ENCODE measurements at regions of chr17 and their contacts with region 1.

Region 1: GRCh38 chr17:4877089-4877488 is 22.2 kb upstream of the C17orf107 start:
- H3K4me3 Mint-ChIP-seq: no peak overlapping the region
- H3K27ac Mint-ChIP-seq: peak overlapping the region; percentile 78
- H3K4me1 Mint-ChIP-seq: peaks cover 94% of the 10 kb centered on the region
- H3K27me3 Mint-ChIP-seq: no peaks in the 10 kb centered on the region

Region 2: DNA sequence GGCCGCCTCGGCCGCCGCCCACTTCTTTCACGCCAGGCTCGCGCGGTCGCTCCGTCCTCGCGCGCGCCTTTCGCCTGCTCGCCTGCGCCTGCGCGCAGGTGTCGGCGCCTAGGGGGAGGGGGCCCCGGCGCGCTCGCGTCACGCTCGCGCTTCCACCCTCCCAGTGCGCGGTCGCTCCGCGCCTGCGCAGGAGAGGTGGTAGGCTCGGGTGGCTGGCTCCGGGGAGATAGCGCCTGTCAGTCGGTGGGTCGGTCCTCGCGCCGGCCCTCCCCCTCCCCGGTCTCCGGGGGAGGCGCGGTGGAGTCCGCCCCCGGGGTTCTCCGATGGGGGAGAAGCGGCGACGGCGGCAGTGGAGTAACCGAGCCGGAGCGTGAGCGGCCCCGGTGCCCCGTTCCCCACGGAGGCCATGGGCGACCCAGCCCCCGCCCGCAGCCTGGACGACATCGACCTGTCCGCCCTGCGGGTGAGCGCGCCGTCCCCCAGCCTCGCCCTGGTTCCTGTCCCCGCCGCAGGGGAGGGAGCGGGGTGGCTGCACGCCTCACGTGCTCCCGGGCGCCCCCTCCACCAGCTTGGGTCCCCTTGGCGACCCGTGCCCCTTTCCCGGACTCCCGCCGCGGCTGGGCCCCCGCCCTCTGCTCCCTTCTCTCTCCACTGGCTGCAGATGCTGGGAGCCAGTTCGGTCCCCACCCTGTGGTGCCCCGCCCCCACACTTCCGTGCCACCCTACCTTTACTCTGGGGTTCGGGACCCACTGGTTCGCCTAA is 43.7 kb before region 1 on chr17 and contains the start of gene MINK1:
- intact Hi-C with region 1: loop called (anchors 5 kb)
- H3K4me3 Mint-ChIP-seq: peak within 1 kb of the TSS; percentile 88
- H3K27ac Mint-ChIP-seq: peak within 1 kb of the TSS; percentile 87
- H3K4me1 Mint-ChIP-seq: peaks cover 45% of the 10 kb centered on the region
- H3K27me3 Mint-ChIP-seq: peaks cover 3% of the 10 kb centered on the region

Measured in dendritic cell treated with granulocyte-macrophage colony-stimulating factor and Interleukin-4, amounts not matched to agents 40 ng/mL and 50 ng/mL, for 4 days (primary cell).